ENCODE measurements at regions of chr20 and their contacts with region 1.

Region 1: GRCh38 chr20:3679749-3680700 is 1.8 kb downstream of the ADAM33 start:
- DNase-seq: no peak
- H3K4me3 ChIP-seq: no peak overlapping the region
- H3K27ac ChIP-seq: no peak overlapping the region
- H3K4me1 ChIP-seq: peaks cover 3% of the 10 kb centered on the region
- H3K27me3 ChIP-seq: peaks cover 22% of the 10 kb centered on the region
- CTCF ChIP-seq: no peak

Region 2: GRCh38 chr20:3235661-3236330 is 444.2 kb before region 1 on chr20:
- CTCF ChIA-PET with region 1: no interaction called
- dilution Hi-C with region 1: no loop called
- in situ Hi-C with region 1: no loop called
- intact Hi-C with region 1: no loop called
- DNase-seq: peak; percentile 73
- H3K4me3 ChIP-seq: no peak overlapping the region
- H3K27ac ChIP-seq: no peak overlapping the region
- H3K4me1 ChIP-seq: peaks cover 28% of the 10 kb centered on the region
- H3K27me3 ChIP-seq: no peaks in the 10 kb centered on the region
- CTCF ChIP-seq: no peak

Region 3: GRCh38 chr20:3645297-3646066 is 34.5 kb before region 1 on chr20:
- CTCF ChIA-PET with region 1: no interaction called
- dilution Hi-C with region 1: no loop called
- in situ Hi-C with region 1: no loop called
- intact Hi-C with region 1: no loop called
- DNase-seq: no peak
- H3K4me3 ChIP-seq: no peak overlapping the region
- H3K27ac ChIP-seq: no peak overlapping the region
- H3K4me1 ChIP-seq: no peaks in the 10 kb centered on the region
- H3K27me3 ChIP-seq: no peaks in the 10 kb centered on the region
- CTCF ChIP-seq: no peak

Region 4: DNA sequence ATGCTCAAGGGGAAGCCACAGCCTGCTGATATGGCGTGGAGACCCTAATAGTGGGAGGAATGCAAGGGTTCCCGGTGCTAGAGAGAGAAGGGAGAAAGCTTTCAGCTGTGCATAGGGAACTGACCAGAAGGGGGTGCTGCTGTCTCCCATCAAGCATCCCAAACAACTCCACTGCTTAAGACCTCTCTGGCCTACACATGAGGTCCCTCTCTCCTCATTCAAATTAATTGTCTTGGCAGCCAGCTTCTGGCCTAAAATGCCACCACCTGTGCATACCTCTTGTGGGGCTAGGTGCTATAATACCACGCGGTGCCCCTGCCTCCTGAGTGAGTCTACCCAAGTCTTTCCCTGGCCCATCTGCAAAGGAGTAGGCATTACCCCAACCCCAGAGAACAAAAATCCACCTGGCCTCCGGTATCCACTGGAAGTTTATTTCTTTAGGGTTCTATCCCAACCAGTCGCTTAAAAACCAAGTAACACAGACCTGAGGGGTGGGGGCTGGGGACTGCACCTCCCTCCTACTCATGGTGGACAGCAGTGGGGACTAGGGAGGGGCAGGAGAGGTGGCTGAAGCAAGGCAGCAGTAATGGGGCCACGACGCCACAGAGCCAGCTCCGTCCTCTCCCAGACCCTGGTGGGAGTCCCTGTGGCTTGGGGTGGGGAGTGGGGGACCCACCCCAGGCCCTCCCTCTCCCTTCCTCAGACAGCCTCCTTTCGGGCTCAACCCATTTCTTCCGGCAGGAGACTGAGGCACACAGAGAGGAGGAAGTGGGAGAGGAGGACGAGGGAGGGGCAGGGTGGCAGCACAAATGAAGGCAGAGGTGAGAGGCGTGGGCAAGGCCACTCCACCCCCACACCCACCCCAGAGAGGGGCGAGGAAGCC is 73.3 kb after region 1 on chr20:
- CTCF ChIA-PET with region 1: no interaction called
- dilution Hi-C with region 1: no loop called
- in situ Hi-C with region 1: no loop called
- intact Hi-C with region 1: loop called (anchors 1 kb)
- DNase-seq: peak; percentile 41
- H3K4me3 ChIP-seq: no peak overlapping the region
- H3K27ac ChIP-seq: no peak overlapping the region
- H3K4me1 ChIP-seq: peaks cover 19% of the 10 kb centered on the region
- H3K27me3 ChIP-seq: no peaks in the 10 kb centered on the region
- CTCF ChIP-seq: peak; percentile 71 to 80

Region 5: DNA sequence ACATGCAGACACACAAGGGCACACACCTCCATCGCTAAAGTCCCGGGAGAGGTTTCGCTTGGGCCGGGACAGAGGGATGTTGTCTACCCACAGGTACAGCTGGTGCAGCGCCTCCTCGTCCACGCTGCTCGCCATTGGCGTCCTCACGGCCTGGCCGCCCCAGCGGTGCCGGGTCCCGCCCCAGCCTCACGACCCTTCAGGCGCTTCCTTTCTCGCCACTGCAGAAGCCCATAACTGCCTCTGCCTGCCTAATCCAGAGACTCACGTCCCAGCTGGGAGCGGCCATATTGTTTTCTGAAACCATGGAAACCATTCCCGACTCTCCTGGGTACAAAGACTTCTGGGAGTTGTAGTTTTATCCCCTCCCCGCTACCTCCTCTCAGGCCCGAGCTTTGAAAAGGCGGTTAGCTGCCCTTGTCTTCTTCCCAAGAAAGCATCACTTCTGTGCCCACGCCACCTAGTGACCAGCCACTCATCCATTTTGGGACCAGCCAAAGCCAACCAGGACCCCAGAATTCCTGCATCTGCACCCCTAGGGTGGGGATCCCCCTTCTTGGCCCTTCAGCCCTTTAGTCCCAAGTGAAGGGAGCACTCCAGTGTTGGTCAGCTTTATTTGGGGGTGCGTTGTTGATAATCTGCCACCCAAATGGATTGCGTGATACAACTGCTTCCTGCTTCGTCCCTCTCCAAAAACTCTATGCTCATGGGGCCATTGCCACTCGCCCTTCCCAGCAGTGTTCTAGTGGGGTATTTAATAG is 101.3 kb after region 1 on chr20 and contains the start of gene SPEF1:
- CTCF ChIA-PET with region 1: interaction called, 5 read pairs
- dilution Hi-C with region 1: no loop called
- in situ Hi-C with region 1: no loop called
- intact Hi-C with region 1: loop called (anchors 1 kb)
- DNase-seq: peak; percentile 88
- H3K4me3 ChIP-seq: peak within 1 kb of the TSS; percentile 2 to 55 (median 51)
- H3K27ac ChIP-seq: peak within 1 kb of the TSS; percentile 11
- H3K4me1 ChIP-seq: peaks cover 44% of the 10 kb centered on the region
- H3K27me3 ChIP-seq: no peaks in the 10 kb centered on the region
- CTCF ChIP-seq: peak; percentile 7 to 56
- total RNA-seq, gene SPEF1: 0.17 to 0.26 TPM

Region 6: DNA sequence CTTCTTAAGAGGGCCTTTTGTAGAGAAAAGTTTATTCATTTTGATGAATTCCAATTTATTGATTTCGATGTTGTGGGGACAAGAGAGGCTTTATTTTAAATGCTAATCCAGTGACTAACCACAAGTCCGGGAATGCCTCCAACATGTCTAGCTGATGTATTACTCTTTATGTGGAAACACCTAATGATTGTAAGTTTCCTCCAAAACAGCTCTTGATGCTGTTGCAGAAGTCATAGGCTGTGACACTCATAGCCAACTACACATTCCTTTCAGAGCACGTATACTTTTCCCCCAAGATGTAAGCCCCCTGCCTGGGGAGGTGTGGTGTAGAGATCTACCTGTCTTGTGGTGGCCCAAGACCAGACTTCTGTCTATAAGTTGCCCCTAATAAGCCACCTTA is 396.6 kb after region 1 on chr20:
- CTCF ChIA-PET with region 1: no interaction called
- dilution Hi-C with region 1: no loop called
- in situ Hi-C with region 1: no loop called
- intact Hi-C with region 1: loop called (anchors 1 kb)
- DNase-seq: peak; percentile 80
- H3K4me3 ChIP-seq: no peak overlapping the region
- H3K27ac ChIP-seq: peak overlapping the region; percentile 1
- H3K4me1 ChIP-seq: peaks cover 5% of the 10 kb centered on the region
- H3K27me3 ChIP-seq: no peaks in the 10 kb centered on the region
- CTCF ChIP-seq: no peak

Measured in mammary epithelial cell (primary cell).